ENCODE measurements at regions of chr10 and their contacts with region 1.

Region 1: GRCh38 chr10:60208676-60209269 is 180.9 kb downstream of the ANK3 start:
- DNase-seq: no peak
- H3K4me3 ChIP-seq: no peak overlapping the region
- H3K27ac ChIP-seq: no peak overlapping the region
- H3K4me1 ChIP-seq: peaks cover 0 to 4% (median 2%) of the 10 kb centered on the region in 4 experiments; a peak in 2 of 7 replicates
- H3K27me3 ChIP-seq: no peaks in the 10 kb centered on the region
- CTCF ChIP-seq: peak in 2 of 3 experiments; percentile 64 to 79; a peak in 2 of 4 replicates
- EP300 ChIP-seq: no peak
- POLR2A ChIP-seq: no peak
- RAD21 ChIP-seq: peak; percentile 88 to 89

Region 2: DNA sequence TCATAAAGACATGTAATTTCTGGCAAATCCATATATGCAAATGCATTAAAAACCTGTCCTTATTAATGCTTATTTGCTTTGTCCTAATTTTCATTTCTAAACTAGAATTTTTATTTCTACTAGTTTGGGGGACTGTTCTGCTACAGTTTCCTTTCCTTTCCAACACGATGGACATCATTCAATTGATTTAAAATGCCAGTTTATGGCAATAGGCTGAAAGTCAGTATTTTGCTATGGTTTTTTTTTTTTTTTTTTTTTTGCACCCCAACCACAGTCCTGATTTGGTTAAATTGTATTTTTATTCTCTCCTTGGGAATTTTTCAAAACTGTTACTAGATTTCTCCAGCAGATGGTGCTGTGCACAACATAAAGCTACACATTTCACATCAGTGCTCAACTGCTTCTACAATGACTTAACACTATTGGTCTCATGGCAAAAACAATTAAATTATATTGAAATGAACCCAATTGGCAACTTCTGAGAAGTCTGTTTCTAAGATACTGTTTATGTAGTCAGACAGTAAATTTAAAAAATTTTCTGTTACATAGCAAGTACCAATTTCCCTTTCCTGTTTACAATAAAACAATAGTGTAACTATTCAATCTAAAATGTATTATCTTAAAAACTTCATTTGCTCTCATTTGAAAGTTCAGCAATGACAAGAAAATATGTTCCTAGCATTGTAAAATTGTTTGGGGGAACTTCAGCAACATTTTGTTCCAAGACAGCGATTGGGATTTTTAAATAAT is 108.6 kb before region 1 on chr10:
- CTCF ChIA-PET with region 1: interaction called, 140 read pairs
- POLR2A ChIA-PET with region 1: no interaction called
- DNase-seq: no peak
- H3K4me3 ChIP-seq: no peak overlapping the region
- H3K27ac ChIP-seq: no peak overlapping the region
- H3K4me1 ChIP-seq: peaks cover 0 to 5% (median 1%) of the 10 kb centered on the region in 4 experiments; a peak in 1 of 7 replicates
- H3K27me3 ChIP-seq: no peaks in the 10 kb centered on the region; a peak in 1 of 7 replicates
- CTCF ChIP-seq: peak in 2 of 3 experiments; percentile 52 to 56; a peak in 2 of 4 replicates
- EP300 ChIP-seq: no peak
- POLR2A ChIP-seq: no peak
- RAD21 ChIP-seq: peak; percentile 69 to 70

Region 3: DNA sequence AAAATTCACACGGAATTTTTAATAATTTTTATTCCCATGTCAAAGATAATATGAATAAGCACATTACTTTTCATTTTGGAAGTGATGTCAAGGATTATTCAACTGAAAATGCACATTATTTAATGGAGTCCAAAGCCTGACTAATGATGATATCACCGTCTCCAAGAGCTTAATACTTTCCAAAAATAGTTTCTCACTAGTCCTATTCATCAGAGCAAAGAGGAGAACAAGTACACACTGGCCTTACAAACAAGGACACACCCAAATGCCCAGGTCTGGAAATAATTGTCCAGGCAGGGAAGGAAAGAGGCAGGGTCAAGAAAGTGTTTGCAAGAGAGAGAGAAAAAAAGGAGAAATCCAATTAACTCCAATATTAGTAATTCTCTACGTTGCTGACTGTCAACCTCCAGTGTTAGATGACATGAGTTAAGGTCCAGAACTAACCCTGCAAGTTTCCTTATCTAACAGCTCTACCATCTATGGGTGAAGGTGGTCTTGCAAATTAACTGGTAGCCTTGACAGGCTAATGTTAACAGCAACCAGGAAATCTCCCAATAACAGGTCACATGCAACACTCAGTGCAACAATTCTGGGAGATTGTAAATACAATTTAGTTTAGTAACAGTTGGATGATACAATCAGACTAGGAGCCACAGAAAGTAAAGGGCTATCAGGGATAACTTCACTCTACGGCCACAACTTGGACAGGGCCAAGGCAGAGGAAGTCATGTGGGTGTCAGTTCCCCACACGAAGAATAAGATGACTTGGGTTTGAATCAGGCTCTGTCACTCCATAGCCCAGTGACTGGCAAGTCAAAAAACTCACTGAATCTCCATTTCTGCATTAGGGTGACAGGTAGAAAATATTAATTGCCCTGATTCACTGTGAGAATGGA is 85.4 kb before region 1 on chr10:
- CTCF ChIA-PET with region 1: interaction called, 151 read pairs
- POLR2A ChIA-PET with region 1: no interaction called
- DNase-seq: no peak
- H3K4me3 ChIP-seq: no peak overlapping the region
- H3K27ac ChIP-seq: no peak overlapping the region
- H3K4me1 ChIP-seq: no peaks in the 10 kb centered on the region
- H3K27me3 ChIP-seq: no peaks in the 10 kb centered on the region
- CTCF ChIP-seq: no peak
- EP300 ChIP-seq: no peak
- POLR2A ChIP-seq: no peak
- RAD21 ChIP-seq: no peak

Region 4: GRCh38 chr10:60175441-60175971 is 33.3 kb before region 1 on chr10:
- CTCF ChIA-PET with region 1: interaction called, 12 read pairs
- POLR2A ChIA-PET with region 1: no interaction called
- DNase-seq: no peak
- H3K4me3 ChIP-seq: no peak overlapping the region
- H3K27ac ChIP-seq: no peak overlapping the region
- H3K4me1 ChIP-seq: no peaks in the 10 kb centered on the region
- H3K27me3 ChIP-seq: no peaks in the 10 kb centered on the region
- CTCF ChIP-seq: no peak
- EP300 ChIP-seq: no peak
- POLR2A ChIP-seq: no peak
- RAD21 ChIP-seq: no peak

Region 5: DNA sequence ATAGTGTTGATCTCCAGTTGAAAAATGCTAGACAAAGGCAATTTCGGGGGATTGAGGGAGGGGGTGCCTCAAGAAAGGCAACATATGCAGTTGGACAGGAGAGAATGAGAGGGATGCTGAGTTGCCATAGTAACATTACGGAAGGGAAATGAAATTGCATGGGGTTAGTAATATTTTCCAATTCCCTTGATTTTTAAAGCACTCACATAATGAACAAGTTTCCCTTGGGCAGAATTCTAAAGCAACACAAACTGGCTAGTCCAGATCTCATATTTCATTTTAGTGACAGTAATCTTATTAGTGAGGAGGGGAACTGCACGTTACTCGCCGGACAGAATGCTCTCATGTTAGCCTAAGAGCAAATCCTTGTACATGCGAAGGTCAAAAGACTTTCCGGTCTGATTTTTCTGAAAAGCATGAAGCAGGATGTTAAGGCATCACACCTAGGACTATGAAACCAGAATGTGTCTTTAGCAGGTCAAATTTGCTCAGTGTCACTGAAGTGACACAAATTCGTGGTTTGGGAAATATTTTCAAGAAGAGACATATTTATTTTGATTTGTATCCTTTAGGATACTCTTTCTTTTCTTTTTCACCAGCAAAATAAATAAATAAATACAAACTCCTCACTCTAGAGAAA is 15.4 kb after region 1 on chr10:
- CTCF ChIA-PET with region 1: interaction called, 10 read pairs
- POLR2A ChIA-PET with region 1: interaction called, 3 read pairs
- DNase-seq: no peak
- H3K4me3 ChIP-seq: no peak overlapping the region
- H3K27ac ChIP-seq: no peak overlapping the region
- H3K4me1 ChIP-seq: no peaks in the 10 kb centered on the region; a peak in 1 of 7 replicates
- H3K27me3 ChIP-seq: no peaks in the 10 kb centered on the region
- CTCF ChIP-seq: no peak
- EP300 ChIP-seq: no peak
- POLR2A ChIP-seq: no peak
- RAD21 ChIP-seq: no peak

Region 6: GRCh38 chr10:60246382-60246781 is 37.6 kb after region 1 on chr10:
- CTCF ChIA-PET with region 1: no interaction called
- POLR2A ChIA-PET with region 1: no interaction called
- DNase-seq: no peak
- H3K4me3 ChIP-seq: no peak overlapping the region
- H3K27ac ChIP-seq: no peak overlapping the region
- H3K4me1 ChIP-seq: no peaks in the 10 kb centered on the region
- H3K27me3 ChIP-seq: no peaks in the 10 kb centered on the region
- CTCF ChIP-seq: no peak
- EP300 ChIP-seq: no peak
- POLR2A ChIP-seq: no peak
- RAD21 ChIP-seq: no peak

Region 7: GRCh38 chr10:60291344-60291930 is 82.7 kb after region 1 on chr10:
- CTCF ChIA-PET with region 1: no interaction called
- POLR2A ChIA-PET with region 1: no interaction called
- DNase-seq: no peak
- H3K4me3 ChIP-seq: no peak overlapping the region
- H3K27ac ChIP-seq: no peak overlapping the region
- H3K4me1 ChIP-seq: no peaks in the 10 kb centered on the region
- H3K27me3 ChIP-seq: no peaks in the 10 kb centered on the region
- CTCF ChIP-seq: no peak
- EP300 ChIP-seq: no peak
- POLR2A ChIP-seq: no peak
- RAD21 ChIP-seq: no peak